GM10248 (cell line): ENCODE measurements at regions of chr2 and their contacts with region 1.

Region 1: GRCh38 chr2:1830936-1831619 is 86.8 kb upstream of the PXDN start:
- DNase-seq: no peak
- CTCF ChIP-seq: no peak

Region 2: GRCh38 chr2:1817256-1818051 is 13.6 kb before region 1 on chr2:
- CTCF ChIA-PET with region 1: interaction called, 16 read pairs
- POLR2A ChIA-PET with region 1: no interaction called
- DNase-seq: peak; percentile 82
- CTCF ChIP-seq: peak; percentile 90